PC-3 (cell line): ENCODE measurements at regions of chr6 and their contacts with region 1.

Region 1: GRCh38 chr6:44074439-44075136 is 52.7 kb downstream of the MRPL14 start:
- DNase-seq: peak; percentile 86
- ATAC-seq: peak; percentile 47
- H3K4me3 ChIP-seq: no peak overlapping the region
- H3K27ac ChIP-seq: peak overlapping the region; percentile 58
- H3K4me1 ChIP-seq: peaks cover 43% of the 10 kb centered on the region
- H3K27me3 ChIP-seq: no peaks in the 10 kb centered on the region
- CTCF ChIP-seq: peak; percentile 97

Region 2: DNA sequence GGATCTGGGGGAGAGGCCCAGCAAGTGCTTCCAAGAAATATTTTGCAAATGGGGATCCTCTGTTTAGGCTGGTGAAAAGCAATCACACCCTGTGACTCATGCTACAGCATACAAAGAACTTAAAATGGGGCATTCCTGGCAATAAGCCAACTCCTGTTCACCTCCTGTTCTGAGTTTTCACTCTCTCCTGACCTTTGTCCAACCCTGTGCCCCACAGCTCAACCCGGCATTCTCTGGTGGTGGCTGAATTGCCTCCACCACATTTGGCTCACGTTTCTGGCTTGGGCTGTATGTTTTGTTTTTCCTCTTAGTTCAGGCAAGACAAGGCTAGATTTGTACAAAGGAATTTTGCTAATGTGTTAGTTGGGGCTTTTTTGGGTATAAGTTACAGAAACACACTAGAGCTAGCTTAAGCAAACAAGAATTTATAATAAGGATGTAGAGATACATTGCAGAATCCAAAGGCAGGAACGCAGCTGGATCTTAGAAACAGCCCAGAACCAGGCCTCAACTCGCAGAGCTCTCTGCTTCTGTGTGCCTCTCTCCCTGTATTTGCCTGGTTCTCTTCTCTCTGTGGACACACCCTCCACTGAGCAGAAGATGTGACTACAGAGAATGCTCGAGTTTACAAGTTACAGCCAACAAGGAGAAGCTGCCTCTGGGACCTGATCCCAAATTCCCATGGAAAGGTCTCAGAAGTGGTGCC is 637.9 kb before region 1 on chr6:
- CTCF ChIA-PET with region 1: no interaction called
- POLR2A ChIA-PET with region 1: no interaction called
- intact Hi-C with region 1: no loop called
- DNase-seq: peak; percentile 77
- ATAC-seq: peak; percentile 89
- H3K4me3 ChIP-seq: no peak overlapping the region
- H3K27ac ChIP-seq: peak overlapping the region; percentile 23
- H3K4me1 ChIP-seq: peaks cover 19% of the 10 kb centered on the region
- H3K27me3 ChIP-seq: no peaks in the 10 kb centered on the region
- CTCF ChIP-seq: no peak

Region 3: GRCh38 chr6:43723737-43724295 is 350.8 kb before region 1 on chr6:
- CTCF ChIA-PET with region 1: no interaction called
- POLR2A ChIA-PET with region 1: no interaction called
- intact Hi-C with region 1: loop called (anchors 1 kb)
- DNase-seq: peak; percentile 91
- ATAC-seq: peak; percentile 79
- H3K4me3 ChIP-seq: no peak overlapping the region
- H3K27ac ChIP-seq: no peak overlapping the region
- H3K4me1 ChIP-seq: peaks cover 30% of the 10 kb centered on the region
- H3K27me3 ChIP-seq: no peaks in the 10 kb centered on the region
- CTCF ChIP-seq: peak; percentile 80

Region 4: DNA sequence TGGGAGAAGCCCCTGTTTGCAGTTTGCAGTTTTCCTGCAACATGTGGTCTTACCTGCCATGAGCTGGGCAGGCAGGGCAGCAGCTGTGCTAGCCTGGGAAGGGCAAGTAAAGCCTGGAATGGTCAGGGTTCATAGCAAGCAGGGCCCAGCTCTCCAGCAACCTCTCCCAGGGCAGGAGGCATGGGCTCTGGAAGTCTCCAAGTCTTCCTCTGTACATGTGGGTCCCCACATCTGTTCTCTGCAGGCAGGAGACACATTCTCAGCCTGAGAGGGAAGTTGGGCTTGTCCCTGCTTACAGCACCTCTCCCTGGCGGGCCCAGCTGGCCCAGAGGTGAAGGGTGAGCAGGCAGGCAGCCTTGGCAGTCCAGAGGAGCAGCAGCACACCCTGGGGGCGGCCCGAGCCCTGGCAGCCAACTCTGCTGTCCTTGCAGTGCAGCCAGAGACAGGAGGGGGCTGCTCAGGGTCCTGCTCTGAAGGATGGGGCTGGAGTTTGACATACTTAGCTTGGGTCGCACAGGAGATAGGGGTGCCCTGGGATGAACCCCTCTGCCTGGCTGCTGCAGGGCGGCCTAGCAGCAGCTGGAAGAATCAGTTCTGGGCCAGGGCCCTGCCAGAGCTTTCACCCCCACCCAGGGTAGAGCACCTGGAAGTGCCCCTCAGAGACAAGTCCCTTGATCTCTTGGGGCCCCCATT is 123.4 kb before region 1 on chr6:
- CTCF ChIA-PET with region 1: interaction called, 3 read pairs
- POLR2A ChIA-PET with region 1: no interaction called
- intact Hi-C with region 1: loop called (anchors 1 kb)
- DNase-seq: peak; percentile 29
- ATAC-seq: peak; percentile 72
- H3K4me3 ChIP-seq: no peak overlapping the region
- H3K27ac ChIP-seq: no peak overlapping the region
- H3K4me1 ChIP-seq: no peaks in the 10 kb centered on the region; the same call in 1 of the 2 replicates
- H3K27me3 ChIP-seq: no peaks in the 10 kb centered on the region
- CTCF ChIP-seq: peak; percentile 45

Region 5: GRCh38 chr6:44010411-44011349 is 63.9 kb before region 1 on chr6:
- CTCF ChIA-PET with region 1: interaction called, 3 read pairs
- POLR2A ChIA-PET with region 1: no interaction called
- intact Hi-C with region 1: loop called (anchors 1 kb)
- DNase-seq: peak; percentile 91
- ATAC-seq: peak; percentile 93
- H3K4me3 ChIP-seq: no peak overlapping the region
- H3K27ac ChIP-seq: peak overlapping the region; percentile 89
- H3K4me1 ChIP-seq: peaks cover 26% of the 10 kb centered on the region
- H3K27me3 ChIP-seq: no peaks in the 10 kb centered on the region
- CTCF ChIP-seq: no peak

Region 6: DNA sequence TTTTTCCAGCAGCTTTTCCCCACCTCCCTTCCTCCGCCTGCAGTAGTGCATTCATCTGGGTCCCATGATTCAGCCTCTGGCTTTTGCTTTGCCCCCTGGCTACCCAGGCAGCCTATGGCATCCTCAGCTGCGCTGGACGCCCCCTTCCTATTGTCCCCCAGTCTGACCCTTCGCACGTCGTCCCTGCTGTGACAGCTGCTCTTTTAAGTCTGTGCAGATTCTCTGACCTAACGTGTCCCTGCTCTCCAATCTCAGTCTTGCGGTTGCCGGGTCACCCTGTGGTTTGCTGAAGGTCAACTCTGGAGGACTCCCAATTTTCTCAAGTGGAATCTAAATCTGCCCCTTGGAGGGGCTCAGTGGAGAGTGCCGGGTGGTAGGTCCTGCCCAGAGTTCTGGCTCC is 607.2 kb after region 1 on chr6:
- CTCF ChIA-PET with region 1: no interaction called
- POLR2A ChIA-PET with region 1: no interaction called
- intact Hi-C with region 1: no loop called
- DNase-seq: no peak
- ATAC-seq: no peak
- H3K4me3 ChIP-seq: no peak overlapping the region
- H3K27ac ChIP-seq: no peak overlapping the region
- H3K4me1 ChIP-seq: peaks cover 6% of the 10 kb centered on the region
- H3K27me3 ChIP-seq: no peaks in the 10 kb centered on the region
- CTCF ChIP-seq: no peak